Gastrocnemius medialis (tissue), 4 donors: ENCODE measurements at regions of chr2 and their contacts with region 1.

Region 1: DNA sequence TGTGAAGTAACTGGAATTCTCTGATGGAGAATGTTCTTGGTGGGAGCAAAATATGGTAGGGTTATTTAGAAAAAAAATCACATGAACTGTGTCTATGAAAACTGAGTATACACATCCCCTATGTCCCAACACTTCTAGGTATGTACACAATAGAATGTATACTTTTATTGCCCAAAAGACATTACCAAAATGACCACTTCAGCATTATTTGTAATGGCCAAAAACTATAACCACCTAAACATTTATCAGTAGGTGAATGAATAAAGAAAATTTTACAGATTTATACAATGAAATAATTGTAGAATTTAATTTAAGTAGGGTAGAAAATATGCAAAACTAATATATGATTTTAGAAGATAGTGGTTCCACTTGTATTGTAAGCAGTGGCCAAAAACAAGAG is 462.8 kb downstream of the KCNJ3 start:
- DNase-seq: no peak
- ATAC-seq: no peak
- H3K4me3 ChIP-seq: no peak overlapping the region
- H3K27ac ChIP-seq: no peak overlapping the region
- H3K4me1 ChIP-seq: no peaks in the 10 kb centered on the region
- H3K27me3 ChIP-seq: no peaks in the 10 kb centered on the region
- CTCF ChIP-seq: no peak
- POLR2A ChIP-seq: no peak

Region 2: GRCh38 chr2:155111070-155111469 is 50.2 kb before region 1 on chr2:
- in situ Hi-C with region 1: no loop called
- intact Hi-C with region 1: no loop called
- DNase-seq: no peak
- ATAC-seq: no peak
- H3K4me3 ChIP-seq: no peak overlapping the region
- H3K27ac ChIP-seq: no peak overlapping the region
- H3K4me1 ChIP-seq: no peaks in the 10 kb centered on the region
- H3K27me3 ChIP-seq: no peaks in the 10 kb centered on the region
- CTCF ChIP-seq: no peak
- POLR2A ChIP-seq: no peak

Region 3: GRCh38 chr2:155125585-155126230 is 35.6 kb before region 1 on chr2:
- in situ Hi-C with region 1: no loop called
- intact Hi-C with region 1: loop called (anchors 2 kb)
- DNase-seq: no peak
- ATAC-seq: no peak
- H3K4me3 ChIP-seq: no peak overlapping the region
- H3K27ac ChIP-seq: no peak overlapping the region
- H3K4me1 ChIP-seq: no peaks in the 10 kb centered on the region
- H3K27me3 ChIP-seq: no peaks in the 10 kb centered on the region
- CTCF ChIP-seq: no peak
- POLR2A ChIP-seq: no peak

Region 4: GRCh38 chr2:155332016-155332415 is 170.7 kb after region 1 on chr2:
- in situ Hi-C with region 1: no loop called
- intact Hi-C with region 1: no loop called
- DNase-seq: no peak
- ATAC-seq: no peak
- H3K4me3 ChIP-seq: no peak overlapping the region
- H3K27ac ChIP-seq: no peak overlapping the region
- H3K4me1 ChIP-seq: no peaks in the 10 kb centered on the region
- H3K27me3 ChIP-seq: no peaks in the 10 kb centered on the region
- CTCF ChIP-seq: no peak
- POLR2A ChIP-seq: no peak